IMR-90 (cell line): ENCODE measurements at regions of chr1 and their contacts with region 1.

Region 1: DNA sequence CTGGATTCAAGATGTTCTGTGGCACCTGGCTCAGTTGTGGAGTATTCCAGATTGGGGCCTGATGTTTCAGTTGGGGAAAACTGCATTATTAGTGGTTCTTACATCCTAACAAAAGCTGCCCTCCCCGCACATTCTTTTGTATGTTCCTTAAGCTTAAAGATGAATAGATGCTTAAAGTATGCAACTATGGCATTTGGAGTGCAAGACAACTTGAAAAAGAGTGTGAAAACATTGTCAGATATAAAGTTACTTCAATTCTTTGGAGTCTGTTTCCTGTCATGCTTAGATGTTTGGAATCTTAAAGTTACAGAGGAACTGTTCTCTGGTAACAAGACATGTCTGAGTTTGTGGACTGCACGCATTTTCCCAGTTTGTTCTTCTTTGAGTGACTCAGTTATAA is 7.2 kb downstream of the FPGT start:
- DNase-seq: peak; percentile 64
- ATAC-seq: peak; percentile 93
- H3K4me3 ChIP-seq: no peak overlapping the region
- H3K27ac ChIP-seq: no peak overlapping the region; the same call in 1 of the 2 replicates
- H3K4me1 ChIP-seq: peaks cover 5% of the 10 kb centered on the region; the same call in 1 of the 2 replicates
- H3K27me3 ChIP-seq: no peaks in the 10 kb centered on the region
- CTCF ChIP-seq: no peak
- POLR2A ChIP-seq: no peak
- RAD21 ChIP-seq: no peak

Region 2: GRCh38 chr1:74107394-74107793 is 97.9 kb before region 1 on chr1:
- CTCF ChIA-PET with region 1: no interaction called
- POLR2A ChIA-PET with region 1: no interaction called
- dilution Hi-C with region 1: no loop called
- in situ Hi-C with region 1: no loop called
- intact Hi-C with region 1: no loop called
- DNase-seq: no peak
- ATAC-seq: no peak
- H3K4me3 ChIP-seq: no peak overlapping the region
- H3K27ac ChIP-seq: no peak overlapping the region
- H3K4me1 ChIP-seq: no peaks in the 10 kb centered on the region
- H3K27me3 ChIP-seq: no peaks in the 10 kb centered on the region
- CTCF ChIP-seq: no peak
- POLR2A ChIP-seq: no peak
- RAD21 ChIP-seq: no peak

Region 3: DNA sequence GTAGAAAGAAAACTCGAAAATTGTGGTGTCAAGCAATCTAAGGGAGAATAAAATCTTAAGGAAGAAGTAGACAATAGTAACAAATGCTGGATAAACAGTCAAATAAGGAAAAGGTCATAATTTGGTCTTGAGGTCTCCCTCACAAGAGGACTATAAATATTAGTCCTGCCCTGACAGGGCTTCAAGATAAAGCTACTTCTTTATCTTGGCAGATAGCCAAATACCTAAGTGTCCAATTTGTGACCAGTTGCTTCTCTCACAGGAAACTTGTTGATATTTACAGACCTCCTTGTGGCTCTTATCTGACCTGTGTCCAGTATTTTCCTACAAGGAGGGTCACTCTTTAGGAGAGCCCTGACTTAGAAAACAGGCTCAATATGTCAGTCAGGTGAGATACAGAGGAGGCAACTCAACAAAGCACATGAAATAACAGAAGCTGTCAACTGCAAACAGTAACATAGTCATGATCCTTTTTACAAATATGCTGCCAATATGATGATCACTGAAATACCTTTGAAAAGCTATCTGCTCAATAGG is 118.7 kb after region 1 on chr1:
- CTCF ChIA-PET with region 1: no interaction called
- POLR2A ChIA-PET with region 1: no interaction called
- dilution Hi-C with region 1: no loop called
- in situ Hi-C with region 1: no loop called
- intact Hi-C with region 1: no loop called
- DNase-seq: no peak
- ATAC-seq: no peak
- H3K4me3 ChIP-seq: no peak overlapping the region
- H3K27ac ChIP-seq: no peak overlapping the region
- H3K4me1 ChIP-seq: no peaks in the 10 kb centered on the region
- H3K27me3 ChIP-seq: no peaks in the 10 kb centered on the region
- CTCF ChIP-seq: no peak
- POLR2A ChIP-seq: no peak
- RAD21 ChIP-seq: no peak

Region 4: GRCh38 chr1:74426208-74426937 is 221.1 kb after region 1 on chr1:
- CTCF ChIA-PET with region 1: no interaction called
- POLR2A ChIA-PET with region 1: no interaction called
- dilution Hi-C with region 1: no loop called
- in situ Hi-C with region 1: no loop called
- intact Hi-C with region 1: loop called (anchors 5 kb)
- DNase-seq: peak; percentile 17
- ATAC-seq: peak; percentile 54
- H3K4me3 ChIP-seq: peak overlapping the region; percentile 29; the same call in 1 of the 2 replicates
- H3K27ac ChIP-seq: peak overlapping the region; percentile 91
- H3K4me1 ChIP-seq: peaks cover 14% of the 10 kb centered on the region; the same call in 1 of the 2 replicates
- H3K27me3 ChIP-seq: no peaks in the 10 kb centered on the region
- CTCF ChIP-seq: no peak
- POLR2A ChIP-seq: no peak
- RAD21 ChIP-seq: no peak

Region 5: DNA sequence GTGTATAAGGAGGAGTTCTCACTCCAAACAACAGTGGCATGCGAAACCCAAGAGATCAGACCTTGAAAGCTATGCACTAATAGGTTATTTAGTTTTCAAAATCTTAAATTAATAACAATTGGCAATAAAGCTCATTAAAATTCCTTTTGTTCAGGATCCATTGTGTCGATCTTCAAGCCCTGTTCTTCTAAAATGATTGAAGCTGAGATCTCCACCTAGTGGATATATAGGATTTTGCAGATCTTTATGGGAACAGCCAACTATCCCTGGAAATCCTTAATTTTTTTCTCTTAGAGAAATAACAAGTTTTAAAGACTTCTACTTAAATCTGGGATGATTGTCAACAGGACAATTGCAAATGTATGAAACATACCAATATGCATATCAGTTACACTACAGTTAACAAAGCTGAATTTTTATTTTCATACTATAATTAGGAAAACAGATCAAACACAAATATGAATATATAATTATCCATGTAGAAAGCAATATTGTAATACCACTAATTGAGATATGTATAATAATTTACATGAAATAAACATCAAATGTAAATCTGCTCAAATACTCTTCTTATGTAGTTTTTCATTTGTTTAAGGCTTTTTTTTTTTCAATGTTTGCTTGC is 263.8 kb after region 1 on chr1:
- CTCF ChIA-PET with region 1: interaction called, 3 read pairs
- POLR2A ChIA-PET with region 1: no interaction called
- dilution Hi-C with region 1: no loop called
- in situ Hi-C with region 1: no loop called
- intact Hi-C with region 1: loop called (anchors 10 kb)
- DNase-seq: peak; percentile 56
- ATAC-seq: peak; percentile 85
- H3K4me3 ChIP-seq: no peak overlapping the region
- H3K27ac ChIP-seq: no peak overlapping the region
- H3K4me1 ChIP-seq: peaks cover 6% of the 10 kb centered on the region; the same call in 1 of the 2 replicates
- H3K27me3 ChIP-seq: no peaks in the 10 kb centered on the region
- CTCF ChIP-seq: peak; percentile 71
- POLR2A ChIP-seq: peak; percentile 37; the same call in 1 of the 2 replicates
- RAD21 ChIP-seq: peak; percentile 80